AG04450 (cell line): ENCODE measurements at regions of chr16 and their contacts with region 1.

Region 1: GRCh38 chr16:55842369-55843104 is 9.6 kb upstream of the CES1 start:
- DNase-seq: peak; percentile 10
- H3K4me3 ChIP-seq: no peak overlapping the region
- H3K27ac ChIP-seq: no peak overlapping the region
- H3K27me3 ChIP-seq: peaks cover 4% of the 10 kb centered on the region
- CTCF ChIP-seq: peak; percentile 69

Region 2: DNA sequence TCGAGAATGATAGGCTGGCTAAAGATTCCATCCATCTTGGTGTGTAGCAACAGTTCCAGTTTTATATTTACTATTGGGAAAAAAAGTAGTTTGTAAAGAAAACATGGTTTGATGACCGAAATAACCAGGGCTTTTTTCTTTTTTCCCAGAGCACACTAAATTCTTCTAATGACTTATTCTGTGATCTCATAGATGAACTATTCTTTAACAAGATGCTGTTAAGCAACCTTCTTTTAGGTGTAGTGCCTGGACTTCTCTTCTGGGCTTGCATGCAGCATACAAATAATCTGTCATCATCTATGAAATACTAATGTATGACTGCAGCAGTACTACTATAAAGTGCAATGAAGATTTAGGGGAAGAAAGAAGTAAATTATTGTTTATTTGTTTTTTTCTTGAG is 287.1 kb before region 1 on chr16:
- CTCF ChIA-PET with region 1: no interaction called
- POLR2A ChIA-PET with region 1: no interaction called
- DNase-seq: no peak
- H3K4me3 ChIP-seq: no peak overlapping the region
- H3K27ac ChIP-seq: no peak overlapping the region
- H3K27me3 ChIP-seq: no peaks in the 10 kb centered on the region
- CTCF ChIP-seq: no peak

Region 3: GRCh38 chr16:55711959-55712876 is 130.3 kb before region 1 on chr16:
- CTCF ChIA-PET with region 1: interaction called, 25 read pairs
- POLR2A ChIA-PET with region 1: no interaction called
- DNase-seq: peak; percentile 7
- H3K4me3 ChIP-seq: no peak overlapping the region
- H3K27ac ChIP-seq: no peak overlapping the region
- H3K27me3 ChIP-seq: no peaks in the 10 kb centered on the region
- CTCF ChIP-seq: peak; percentile 67

Region 4: GRCh38 chr16:55717326-55717725 is 125.2 kb before region 1 on chr16:
- CTCF ChIA-PET with region 1: interaction called, 25 read pairs
- POLR2A ChIA-PET with region 1: no interaction called
- DNase-seq: no peak
- H3K4me3 ChIP-seq: no peak overlapping the region
- H3K27ac ChIP-seq: no peak overlapping the region
- H3K27me3 ChIP-seq: no peaks in the 10 kb centered on the region
- CTCF ChIP-seq: no peak